MCF 10A (cell line): ENCODE measurements at regions of chr1 and their contacts with region 1.

Region 1: DNA sequence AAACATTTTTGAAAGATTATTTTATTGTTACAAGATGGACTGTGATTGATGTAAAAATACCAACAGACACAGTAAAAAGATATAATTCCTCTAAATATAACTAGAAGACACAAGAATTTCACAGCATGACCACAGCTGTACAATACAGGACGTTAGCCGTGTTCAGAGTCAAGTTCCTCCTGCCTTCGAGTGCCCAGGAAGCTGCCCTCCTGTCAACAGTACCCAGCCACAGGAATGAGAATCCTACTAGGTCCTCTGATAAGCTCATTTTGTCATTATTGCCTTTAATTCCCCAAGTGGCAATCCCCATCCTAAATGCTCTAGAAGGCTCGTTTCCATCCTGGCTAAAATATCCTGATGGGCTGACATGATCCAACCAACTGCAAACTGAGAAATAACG is 16.4 kb upstream of the CAPN2 start:
- DNase-seq: no peak
- H3K4me3 Mint-ChIP-seq: no peak overlapping the region
- H3K27ac Mint-ChIP-seq: no peak overlapping the region
- H3K4me1 Mint-ChIP-seq: peaks cover 28% of the 10 kb centered on the region
- H3K27me3 Mint-ChIP-seq: no peaks in the 10 kb centered on the region
- CTCF ChIP-seq: no peak

Region 2: DNA sequence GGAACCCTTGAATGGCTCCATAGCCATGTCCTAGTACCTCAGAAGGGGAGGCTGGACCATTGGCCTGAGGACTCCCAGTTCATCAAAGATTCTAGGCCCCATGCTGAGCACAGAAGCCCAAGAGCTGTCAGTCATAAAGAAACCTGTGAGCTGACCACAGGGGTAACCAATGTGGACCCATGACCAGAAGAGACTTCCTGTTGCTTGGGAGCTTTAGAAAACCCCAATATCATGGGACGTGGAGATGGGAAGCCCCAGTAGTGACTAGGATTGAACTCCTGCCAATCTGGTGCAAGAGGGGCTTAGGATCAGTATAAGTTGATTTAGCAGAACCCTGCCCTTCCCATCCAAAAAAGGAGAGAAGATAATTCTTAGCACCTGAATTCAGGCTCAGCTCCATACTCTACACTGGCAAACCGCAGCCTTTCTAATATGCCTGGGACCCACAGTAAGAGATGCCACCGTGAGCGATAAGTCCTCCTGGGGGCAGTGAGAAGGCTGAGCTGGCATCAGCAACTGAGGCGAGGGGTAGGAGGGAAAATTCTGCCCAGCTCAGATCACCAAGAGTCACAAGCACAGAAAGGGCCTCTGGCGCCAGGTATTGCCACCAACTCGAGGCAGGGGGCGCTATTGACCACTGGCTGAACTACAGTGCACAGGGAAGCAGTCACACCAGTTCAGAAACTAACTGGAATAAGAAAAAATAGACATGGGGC is 139.4 kb before region 1 on chr1:
- CTCF ChIA-PET with region 1: interaction called, 17 read pairs
- POLR2A ChIA-PET with region 1: interaction called, 3 read pairs
- intact Hi-C with region 1: no loop called
- DNase-seq: peak; percentile 87
- H3K4me3 Mint-ChIP-seq: no peak overlapping the region
- H3K27ac Mint-ChIP-seq: no peak overlapping the region
- H3K4me1 Mint-ChIP-seq: no peaks in the 10 kb centered on the region
- H3K27me3 Mint-ChIP-seq: no peaks in the 10 kb centered on the region
- CTCF ChIP-seq: peak; percentile 97

Region 3: GRCh38 chr1:223706077-223706969 is 10.4 kb after region 1 on chr1:
- CTCF ChIA-PET with region 1: interaction called, 53 read pairs
- POLR2A ChIA-PET with region 1: interaction called, 105 read pairs
- intact Hi-C with region 1: no loop called
- DNase-seq: peak; percentile 96
- H3K4me3 Mint-ChIP-seq: peak overlapping the region; percentile 20
- H3K27ac Mint-ChIP-seq: peak overlapping the region; percentile 44
- H3K4me1 Mint-ChIP-seq: peaks cover 69% of the 10 kb centered on the region
- H3K27me3 Mint-ChIP-seq: no peaks in the 10 kb centered on the region
- CTCF ChIP-seq: no peak

Region 4: DNA sequence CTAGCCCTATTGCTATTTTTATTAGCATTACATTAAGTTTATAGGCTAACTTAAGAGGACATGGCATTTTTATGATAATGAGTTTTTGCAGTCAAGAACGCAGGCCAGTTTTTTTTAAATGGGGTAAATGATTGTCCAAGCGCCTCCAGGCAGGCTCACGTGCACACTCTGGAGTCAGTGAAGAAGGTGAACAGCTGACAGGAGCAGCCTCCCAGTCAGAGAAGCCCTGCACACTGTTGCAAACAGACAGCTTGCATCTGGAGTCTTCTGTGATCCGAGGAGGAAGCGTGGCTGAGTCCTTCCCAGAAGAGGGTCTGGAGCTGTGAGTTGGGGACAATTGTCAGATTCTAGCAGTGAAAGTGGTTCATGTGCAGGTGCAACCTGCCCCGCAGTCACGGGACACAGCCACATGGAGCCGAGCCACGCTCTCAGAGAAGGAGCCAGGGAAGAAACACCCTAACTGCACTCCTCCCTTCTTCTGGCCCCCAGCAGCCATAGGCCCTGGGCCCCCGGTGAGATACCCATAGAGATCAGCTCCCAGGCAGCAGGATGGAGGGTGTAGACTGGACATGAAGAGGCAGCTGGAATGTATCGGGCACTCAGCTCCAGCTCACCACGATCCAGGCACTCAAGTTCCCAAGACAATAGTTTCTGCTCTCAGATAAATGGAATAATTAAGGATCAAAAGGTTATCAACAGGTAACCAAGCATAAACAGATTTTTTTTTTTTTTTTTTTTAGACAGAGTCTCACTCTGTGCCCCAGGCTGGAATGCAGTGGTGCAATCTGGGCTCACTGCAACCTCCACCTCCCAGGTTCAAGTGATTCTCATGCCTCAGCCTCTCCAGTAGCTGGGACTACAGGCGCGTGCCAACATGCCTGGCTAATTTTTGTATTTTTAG is 42.8 kb after region 1 on chr1:
- CTCF ChIA-PET with region 1: interaction called, 16 read pairs
- POLR2A ChIA-PET with region 1: interaction called, 11 read pairs
- intact Hi-C with region 1: loop called (anchors 2 kb)
- DNase-seq: peak; percentile 72
- H3K4me3 Mint-ChIP-seq: no peak overlapping the region
- H3K27ac Mint-ChIP-seq: peak overlapping the region; percentile 82
- H3K4me1 Mint-ChIP-seq: peaks cover 42% of the 10 kb centered on the region
- H3K27me3 Mint-ChIP-seq: no peaks in the 10 kb centered on the region
- CTCF ChIP-seq: no peak

Region 5: GRCh38 chr1:223759273-223759672 is 63.3 kb after region 1 on chr1:
- CTCF ChIA-PET with region 1: interaction called, 13 read pairs
- POLR2A ChIA-PET with region 1: interaction called, 3 read pairs
- intact Hi-C with region 1: no loop called
- DNase-seq: no peak
- H3K4me3 Mint-ChIP-seq: no peak overlapping the region
- H3K27ac Mint-ChIP-seq: peak overlapping the region; percentile 13
- H3K4me1 Mint-ChIP-seq: no peaks in the 10 kb centered on the region
- H3K27me3 Mint-ChIP-seq: no peaks in the 10 kb centered on the region
- CTCF ChIP-seq: no peak

Region 6: DNA sequence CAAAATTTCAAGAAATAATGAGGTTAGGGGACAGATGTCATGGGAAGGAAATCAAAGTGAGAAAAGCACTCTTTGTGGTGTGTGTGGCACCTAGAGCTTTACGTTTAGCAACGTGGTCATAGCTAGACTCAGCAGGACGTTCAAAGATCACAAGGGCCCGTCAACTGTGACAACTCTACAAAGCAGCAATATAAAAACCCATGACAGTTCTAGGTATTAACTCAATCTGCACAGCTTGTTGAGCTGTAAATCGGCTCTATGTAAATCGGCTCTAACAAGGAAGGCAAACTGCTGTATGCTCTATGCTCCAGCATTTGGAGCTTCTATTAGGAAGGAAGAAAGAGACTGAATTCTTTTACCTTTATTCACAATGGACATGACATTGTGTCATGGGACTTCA is 85.0 kb after region 1 on chr1:
- CTCF ChIA-PET with region 1: interaction called, 21 read pairs
- POLR2A ChIA-PET with region 1: interaction called, 13 read pairs
- intact Hi-C with region 1: no loop called
- DNase-seq: no peak
- H3K4me3 Mint-ChIP-seq: no peak overlapping the region
- H3K27ac Mint-ChIP-seq: no peak overlapping the region
- H3K4me1 Mint-ChIP-seq: peaks cover 17% of the 10 kb centered on the region
- H3K27me3 Mint-ChIP-seq: no peaks in the 10 kb centered on the region
- CTCF ChIP-seq: no peak